PC-9 (cell line): ENCODE measurements at regions of chr20 and their contacts with region 1.

Region 1: DNA sequence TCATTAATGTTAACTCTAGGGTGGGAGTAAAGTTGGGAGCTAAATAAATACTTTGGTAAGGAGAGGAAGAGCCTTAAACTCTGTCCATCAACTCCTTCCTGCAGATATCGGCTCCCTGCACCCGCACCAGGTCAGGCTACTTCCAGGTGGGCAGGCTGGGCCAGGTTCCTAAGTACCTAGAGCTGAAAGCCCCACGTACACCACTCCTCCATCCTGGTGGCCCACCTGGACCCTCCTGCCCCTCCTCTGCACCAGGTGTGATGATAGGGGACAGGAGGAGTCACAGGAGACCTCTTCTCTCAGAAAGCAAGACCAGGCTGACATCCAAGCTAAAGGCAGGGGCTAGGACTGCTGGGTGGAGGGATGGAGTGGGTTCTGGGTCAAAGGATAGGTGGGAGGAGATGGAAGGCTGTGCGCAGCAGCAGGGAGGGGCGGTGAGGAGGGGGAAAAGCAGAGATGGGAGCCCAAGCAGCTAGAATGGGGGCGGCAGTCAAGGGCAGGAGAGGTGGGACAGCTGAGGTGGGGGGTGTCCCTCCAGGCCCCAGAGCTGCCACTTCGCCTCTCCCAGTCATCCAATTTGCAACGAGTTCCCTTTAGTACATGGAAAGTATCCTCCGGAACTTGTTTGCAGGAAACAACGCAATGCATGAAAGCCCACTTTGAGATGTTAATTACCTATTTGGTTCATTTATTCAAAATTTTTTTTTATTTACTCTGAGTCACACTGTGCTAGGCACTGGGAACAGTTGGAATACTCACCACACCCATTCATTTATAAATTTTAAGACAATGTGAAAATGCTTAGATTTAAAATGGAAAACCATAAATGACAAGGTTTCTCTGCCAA is 15.2 kb upstream of the TOX2 start:
- DNase-seq: no peak
- H3K4me3 ChIP-seq: no peak overlapping the region
- H3K27ac ChIP-seq: no peak overlapping the region
- H3K4me1 ChIP-seq: peaks cover 5% of the 10 kb centered on the region
- H3K27me3 ChIP-seq: no peaks in the 10 kb centered on the region
- CTCF ChIP-seq: no peak

Region 2: GRCh38 chr20:43220612-43221011 is 678.9 kb before region 1 on chr20:
- CTCF ChIA-PET with region 1: no interaction called
- POLR2A ChIA-PET with region 1: no interaction called
- intact Hi-C with region 1: no loop called
- DNase-seq: no peak
- H3K4me3 ChIP-seq: no peak overlapping the region
- H3K27ac ChIP-seq: no peak overlapping the region
- H3K4me1 ChIP-seq: no peaks in the 10 kb centered on the region
- H3K27me3 ChIP-seq: peaks cover 61% of the 10 kb centered on the region
- CTCF ChIP-seq: no peak

Region 3: GRCh38 chr20:43799150-43799711 is 100.3 kb before region 1 on chr20:
- CTCF ChIA-PET with region 1: no interaction called
- POLR2A ChIA-PET with region 1: interaction called, 11 read pairs
- intact Hi-C with region 1: no loop called
- DNase-seq: no peak
- H3K4me3 ChIP-seq: no peak overlapping the region
- H3K27ac ChIP-seq: no peak overlapping the region
- H3K4me1 ChIP-seq: peaks cover 8% of the 10 kb centered on the region; the same call in 1 of the 2 replicates
- H3K27me3 ChIP-seq: no peaks in the 10 kb centered on the region
- CTCF ChIP-seq: no peak